ENCODE measurements at regions of chr5 and their contacts with region 1.

Region 1: GRCh38 chr5:37174928-37175327 is 74.2 kb downstream of the CPLANE1 start:
- DNase-seq: no peak
- ATAC-seq: no peak
- H3K4me3 ChIP-seq: no peak overlapping the region
- H3K27ac ChIP-seq: no peak overlapping the region
- H3K4me1 ChIP-seq: no peaks in the 10 kb centered on the region
- H3K27me3 ChIP-seq: no peaks in the 10 kb centered on the region

Region 2: DNA sequence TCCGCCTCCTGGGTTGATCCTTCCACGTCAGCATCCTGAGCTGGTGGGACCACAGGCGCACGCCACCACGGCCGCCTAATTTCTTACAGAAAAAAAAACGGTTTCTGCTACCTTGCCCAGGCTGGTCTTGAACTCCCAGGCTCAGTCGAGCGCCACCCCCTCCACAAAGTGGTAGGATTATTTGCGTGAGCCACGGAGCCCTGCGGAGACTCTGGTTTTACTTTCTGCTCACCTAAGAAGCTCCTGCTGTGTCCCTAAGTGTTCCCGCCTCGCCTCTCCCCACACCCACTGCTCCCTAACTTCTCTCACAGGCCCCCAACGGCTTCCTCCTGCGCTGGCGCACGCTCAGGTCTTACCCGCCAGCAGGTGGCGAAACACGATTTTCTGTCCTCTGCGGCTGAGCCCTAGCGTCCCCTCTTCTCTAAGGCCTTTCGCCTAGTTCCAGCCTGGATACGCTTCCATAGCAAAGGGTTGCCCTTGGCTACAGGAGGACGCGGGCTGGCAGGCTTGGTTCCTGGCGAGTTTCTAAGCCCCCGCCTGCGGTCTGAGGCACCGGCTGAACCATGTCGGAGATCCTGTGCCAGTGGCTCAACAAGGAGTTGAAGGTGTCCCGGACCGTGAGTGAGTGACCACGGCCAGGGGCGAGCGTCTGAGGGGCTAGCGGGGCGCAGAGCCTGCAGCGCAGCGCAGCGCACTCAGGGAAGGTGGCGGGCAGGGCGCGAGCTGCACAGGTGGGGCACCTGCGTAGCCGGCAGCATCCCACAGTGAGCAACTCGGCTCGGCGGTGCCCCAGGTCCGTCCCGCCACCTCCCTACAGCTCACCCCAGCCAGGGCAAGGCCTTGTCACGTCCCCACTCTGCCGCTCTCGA is 1557.3 kb before region 1 on chr5 and contains the start of gene SPEF2:
- intact Hi-C with region 1: no loop called
- DNase-seq: peak; percentile 86 to 93
- ATAC-seq: peak; percentile 96
- H3K4me3 ChIP-seq: peak within 1 kb of the TSS; percentile 78 to 92
- H3K27ac ChIP-seq: peak within 1 kb of the TSS in 1 of 2 donors; percentile 42
- H3K4me1 ChIP-seq: no peaks in the 10 kb centered on the region
- H3K27me3 ChIP-seq: no peaks in the 10 kb centered on the region
- total RNA-seq, gene SPEF2: 4.4 to 10.9 TPM

Region 3: DNA sequence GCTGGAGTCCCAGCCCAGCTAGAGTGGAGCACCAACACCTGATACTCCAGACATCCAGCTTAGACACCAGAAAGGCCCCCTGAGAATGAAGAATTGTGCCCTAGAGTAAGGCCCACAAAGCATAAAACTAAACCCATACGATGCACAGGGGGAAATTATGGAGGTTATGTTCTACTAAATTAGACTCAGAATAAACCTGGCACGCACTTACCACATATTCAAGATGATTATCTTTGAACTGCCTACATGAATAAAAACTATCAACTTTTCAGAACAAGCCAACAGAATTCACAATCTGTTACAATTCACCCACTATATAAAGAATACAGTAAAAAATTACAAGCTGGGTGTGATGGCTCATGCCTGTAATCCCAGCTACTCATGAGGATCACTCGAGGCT is 94.2 kb before region 1 on chr5:
- intact Hi-C with region 1: no loop called
- DNase-seq: no peak
- ATAC-seq: no peak
- H3K4me3 ChIP-seq: no peak overlapping the region
- H3K27ac ChIP-seq: no peak overlapping the region
- H3K4me1 ChIP-seq: no peaks in the 10 kb centered on the region
- H3K27me3 ChIP-seq: no peaks in the 10 kb centered on the region

Region 4: DNA sequence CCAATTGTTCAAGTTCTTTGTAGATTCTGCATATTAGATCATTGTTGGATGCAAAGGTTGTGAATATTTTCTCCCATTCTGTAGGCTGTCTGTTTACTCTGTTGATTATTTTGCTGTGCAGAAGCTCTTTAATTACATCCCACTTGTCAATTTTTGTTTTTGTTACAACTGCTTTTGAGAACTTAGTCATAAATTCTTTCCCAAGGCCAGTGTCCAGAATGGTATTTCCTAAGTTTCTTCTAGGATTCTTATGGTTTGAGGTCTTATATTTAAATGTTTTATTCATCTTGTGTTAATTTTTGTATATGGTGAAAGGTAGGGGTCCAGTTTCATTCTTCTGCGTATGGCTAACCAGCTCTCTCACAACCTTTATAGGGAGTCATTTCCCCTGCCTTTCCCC is 42.3 kb before region 1 on chr5:
- intact Hi-C with region 1: no loop called
- DNase-seq: no peak
- ATAC-seq: no peak
- H3K4me3 ChIP-seq: no peak overlapping the region
- H3K27ac ChIP-seq: no peak overlapping the region
- H3K4me1 ChIP-seq: no peaks in the 10 kb centered on the region
- H3K27me3 ChIP-seq: no peaks in the 10 kb centered on the region

Region 5: GRCh38 chr5:37308796-37309195 is 133.9 kb after region 1 on chr5:
- intact Hi-C with region 1: loop called in 1 of 2 experiments (anchors 10 kb)
- DNase-seq: no peak
- ATAC-seq: no peak
- H3K4me3 ChIP-seq: no peak overlapping the region
- H3K27ac ChIP-seq: no peak overlapping the region
- H3K4me1 ChIP-seq: no peaks in the 10 kb centered on the region
- H3K27me3 ChIP-seq: no peaks in the 10 kb centered on the region

Region 6: GRCh38 chr5:37319037-37319782 is 144.3 kb after region 1 on chr5:
- intact Hi-C with region 1: no loop called
- DNase-seq: no peak
- ATAC-seq: no peak
- H3K4me3 ChIP-seq: no peak overlapping the region
- H3K27ac ChIP-seq: no peak overlapping the region
- H3K4me1 ChIP-seq: no peaks in the 10 kb centered on the region
- H3K27me3 ChIP-seq: no peaks in the 10 kb centered on the region

Measured in aorta (tissue), 5 donors.